GM13976 (cell line): ENCODE measurements at regions of chr17 and their contacts with region 1.

Region 1: DNA sequence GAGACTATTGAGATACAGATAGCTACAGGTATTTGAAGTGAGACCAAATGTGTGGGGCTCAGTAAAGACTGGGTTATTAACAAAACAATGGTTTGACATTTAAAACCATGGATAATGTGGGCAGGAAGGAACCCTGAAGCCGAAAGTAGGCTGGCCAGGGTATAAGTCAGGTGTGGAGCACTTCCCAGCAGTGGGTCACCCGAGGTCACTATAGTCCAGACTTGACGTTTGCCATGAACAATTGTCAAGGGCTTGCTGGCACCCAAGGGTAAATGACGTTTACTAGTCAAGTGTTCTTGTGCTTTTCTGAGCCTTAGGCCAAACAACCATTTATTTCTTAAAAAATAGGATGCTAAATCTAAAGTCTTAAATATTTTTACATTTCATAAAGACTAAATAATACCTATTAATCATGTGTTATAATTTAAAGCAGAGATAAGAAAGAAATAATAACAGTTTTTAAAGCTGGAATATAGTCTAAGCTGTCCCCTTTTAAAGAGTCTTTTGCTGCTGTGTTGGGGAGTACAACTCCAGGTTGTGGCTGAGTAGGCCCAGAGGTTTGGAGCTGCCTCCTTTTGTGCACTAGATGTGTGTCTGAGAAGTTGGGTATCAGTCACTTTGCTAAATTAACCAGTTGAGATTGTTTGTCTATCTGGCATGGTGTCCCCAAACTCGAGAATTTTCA is 15.7 kb downstream of the ALDH3A2 start:
- DNase-seq: no peak
- CTCF ChIP-seq: no peak

Region 2: DNA sequence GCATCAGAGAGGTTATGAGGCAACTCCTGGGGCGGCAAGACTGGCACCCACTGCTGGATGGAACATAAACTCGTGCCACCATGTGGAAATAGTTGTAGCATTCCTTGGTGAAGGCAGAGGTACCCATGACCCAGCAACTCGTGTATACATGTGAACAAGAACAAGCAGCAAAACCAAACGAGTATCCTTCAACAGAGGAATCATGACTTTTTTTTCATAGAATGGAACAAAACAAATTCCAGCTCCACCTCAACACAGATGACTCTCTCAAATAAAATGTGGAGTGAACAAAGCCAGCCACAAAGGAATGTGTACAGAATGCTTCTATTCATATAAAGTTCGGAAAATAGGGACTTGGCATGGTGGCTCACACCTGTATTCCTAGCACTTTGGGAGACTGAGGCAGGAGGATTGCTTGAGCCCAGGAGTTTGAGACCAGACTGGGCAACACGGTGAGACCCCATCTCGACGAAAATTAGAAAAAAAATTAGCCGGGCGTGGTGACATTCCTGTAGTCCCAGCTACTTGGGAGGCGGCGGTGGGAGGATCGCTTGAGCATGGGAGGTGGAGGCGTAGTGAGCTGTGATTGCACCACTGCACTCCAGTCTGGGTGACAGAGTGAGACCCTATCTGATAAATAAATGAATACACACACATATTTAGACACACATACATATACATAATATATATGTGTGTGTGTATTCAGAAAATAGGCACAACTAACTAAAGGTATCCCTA is 337.1 kb before region 1 on chr17:
- in situ Hi-C with region 1: no loop called
- DNase-seq: no peak
- CTCF ChIP-seq: no peak

Region 3: DNA sequence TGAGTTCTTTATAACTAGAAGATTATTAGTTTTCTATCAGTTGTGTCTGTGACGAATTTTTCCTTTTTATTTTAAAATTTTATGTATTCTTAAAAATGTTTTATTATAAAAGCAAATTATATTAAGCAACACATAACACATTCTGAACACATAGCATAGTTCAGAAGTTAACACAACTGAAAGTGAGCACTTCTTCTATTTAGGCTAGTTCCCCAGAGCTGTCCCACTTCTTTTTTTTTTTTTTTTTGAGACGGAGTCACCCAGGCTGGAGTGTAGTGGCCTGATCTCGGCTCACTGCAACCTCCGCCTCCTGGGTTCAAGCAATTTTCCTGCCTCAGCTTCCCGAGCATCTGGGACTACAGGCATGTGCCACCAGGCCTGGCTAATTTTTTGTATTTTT is 53.4 kb before region 1 on chr17:
- in situ Hi-C with region 1: loop called (anchors 10 kb)
- DNase-seq: no peak
- CTCF ChIP-seq: no peak